ENCODE measurements at regions of chr15 and their contacts with region 1.

Region 1: GRCh38 chr15:68650901-68651709 is 72.3 kb downstream of the CORO2B start:
- DNase-seq: no peak
- H3K4me3 ChIP-seq: no peak overlapping the region
- CTCF ChIP-seq: peak; percentile 85

Region 2: DNA sequence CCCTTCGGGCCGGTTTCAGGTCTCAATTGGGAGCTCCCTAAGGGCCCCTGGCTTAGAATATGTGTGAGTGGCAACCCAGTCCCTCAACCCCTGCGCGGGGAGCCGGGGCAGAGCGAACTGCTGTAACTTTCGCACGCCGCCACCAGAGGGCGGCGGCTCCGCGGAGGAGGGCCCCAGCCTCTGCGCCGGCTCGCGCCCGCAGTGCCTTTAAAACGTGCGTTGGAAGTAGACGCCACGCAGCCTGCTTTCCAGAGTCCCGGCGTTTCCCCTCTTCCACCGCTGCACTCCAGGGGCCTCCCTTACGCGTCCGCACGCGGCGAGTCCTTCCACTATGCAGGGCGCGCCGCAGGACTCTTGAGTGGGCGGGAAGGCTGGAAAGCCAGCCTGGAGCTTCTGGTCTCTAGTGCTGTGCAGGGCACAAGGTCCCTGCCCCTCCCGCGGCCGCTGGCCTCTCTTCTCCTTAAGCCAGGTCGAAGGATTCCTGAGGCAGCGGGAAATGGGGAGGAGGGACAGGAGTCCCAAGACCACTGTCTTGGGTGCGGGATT is 787.6 kb before region 1 on chr15:
- CTCF ChIA-PET with region 1: no interaction called
- POLR2A ChIA-PET with region 1: no interaction called
- DNase-seq: no peak
- H3K4me3 ChIP-seq: peak overlapping the region; percentile 51
- CTCF ChIP-seq: peak; percentile 92

Region 3: GRCh38 chr15:68637767-68638404 is 13.2 kb before region 1 on chr15:
- CTCF ChIA-PET with region 1: interaction called, 18 read pairs
- POLR2A ChIA-PET with region 1: no interaction called
- DNase-seq: no peak
- H3K4me3 ChIP-seq: no peak overlapping the region
- CTCF ChIP-seq: no peak

Region 4: DNA sequence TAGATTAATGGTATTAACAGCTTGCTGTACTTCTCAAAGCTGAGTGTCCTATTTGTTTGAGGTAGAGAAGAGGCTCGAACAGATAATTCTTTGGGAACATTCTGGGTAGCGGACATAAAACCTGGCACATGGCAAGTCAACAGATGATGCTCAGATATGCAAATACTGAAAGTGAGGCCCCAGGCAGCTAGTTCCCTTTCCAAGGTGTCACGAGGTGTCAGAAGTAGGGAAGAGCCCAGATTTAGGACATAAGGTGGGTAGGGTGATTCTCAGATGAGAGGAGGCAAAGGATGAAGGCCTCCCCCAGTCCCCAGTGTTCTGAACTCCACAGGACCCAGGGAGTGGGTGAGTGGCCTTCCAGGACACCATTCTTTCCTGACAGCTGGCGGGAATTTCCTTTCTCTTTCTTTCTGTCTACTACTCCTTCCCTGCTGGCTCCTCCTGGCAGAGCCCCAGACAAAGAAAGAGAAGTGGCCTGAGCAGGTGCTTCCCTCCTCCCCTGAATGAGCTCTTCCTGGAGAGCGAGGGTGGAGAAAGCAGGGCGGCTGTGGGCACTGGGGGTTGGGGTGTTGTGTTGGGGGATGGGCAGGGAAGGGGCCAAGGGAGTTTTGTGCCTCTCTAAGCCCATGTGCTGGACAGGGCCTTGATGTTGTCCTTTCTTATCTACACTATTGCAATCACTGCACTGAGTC is 15.2 kb after region 1 on chr15:
- CTCF ChIA-PET with region 1: interaction called, 199 read pairs
- POLR2A ChIA-PET with region 1: no interaction called
- DNase-seq: no peak
- H3K4me3 ChIP-seq: no peak overlapping the region
- CTCF ChIP-seq: no peak